ENCODE measurements at regions of chr1 and their contacts with region 1.

Region 1: GRCh38 chr1:201447911-201448871 is 20.8 kb downstream of the PHLDA3 start:
- DNase-seq: peak; percentile 65 to 67
- H3K4me3 ChIP-seq: no peak overlapping the region
- H3K4me3 Mint-ChIP-seq: no peak overlapping the region
- H3K27ac Mint-ChIP-seq: no peak overlapping the region
- H3K4me1 ChIP-seq: no peaks in the 10 kb centered on the region
- H3K4me1 Mint-ChIP-seq: no peaks in the 10 kb centered on the region
- H3K27me3 ChIP-seq: no peaks in the 10 kb centered on the region
- H3K27me3 Mint-ChIP-seq: peaks cover 2% of the 10 kb centered on the region
- CTCF ChIP-seq: peak; percentile 82 to 88

Region 2: DNA sequence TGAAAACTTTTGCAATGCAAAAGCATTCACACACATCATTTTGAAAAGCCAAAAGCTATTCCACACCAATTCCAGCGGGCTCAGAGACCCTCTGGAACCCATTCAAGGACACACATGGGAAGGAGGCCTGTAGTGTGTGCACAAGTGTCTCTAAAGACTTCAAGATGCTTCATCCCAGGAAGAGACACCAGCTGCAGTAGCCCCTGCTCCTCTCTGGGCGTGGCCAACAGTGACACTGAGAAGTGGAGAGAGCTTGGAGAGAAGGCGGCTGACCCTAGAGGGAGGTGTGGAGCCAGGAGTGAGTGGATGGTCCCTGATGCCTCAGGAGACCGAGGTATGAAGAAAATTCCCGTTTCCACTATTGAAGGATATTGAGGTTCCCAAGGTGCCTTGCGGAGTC is 11.8 kb before region 1 on chr1:
- CTCF ChIA-PET with region 1: interaction called, 25 read pairs
- POLR2A ChIA-PET with region 1: no interaction called
- intact Hi-C with region 1: no loop called
- DNase-seq: peak; percentile 66 to 72
- H3K4me3 ChIP-seq: no peak overlapping the region
- H3K4me3 Mint-ChIP-seq: no peak overlapping the region
- H3K27ac Mint-ChIP-seq: no peak overlapping the region
- H3K4me1 ChIP-seq: no peaks in the 10 kb centered on the region
- H3K4me1 Mint-ChIP-seq: peaks cover 6% of the 10 kb centered on the region
- H3K27me3 ChIP-seq: no peaks in the 10 kb centered on the region
- H3K27me3 Mint-ChIP-seq: peaks cover 3% of the 10 kb centered on the region
- CTCF ChIP-seq: peak in 1 of 2 experiments; percentile 44

Region 3: GRCh38 chr1:201460814-201461657 is 12.8 kb after region 1 on chr1:
- CTCF ChIA-PET with region 1: interaction called, 17 read pairs
- POLR2A ChIA-PET with region 1: no interaction called
- intact Hi-C with region 1: no loop called
- DNase-seq: peak; percentile 78 to 85
- H3K4me3 ChIP-seq: no peak overlapping the region
- H3K4me3 Mint-ChIP-seq: peak overlapping the region; percentile 46
- H3K27ac Mint-ChIP-seq: peak overlapping the region; percentile 88
- H3K4me1 ChIP-seq: peaks cover 26% of the 10 kb centered on the region
- H3K4me1 Mint-ChIP-seq: peaks cover 27% of the 10 kb centered on the region
- H3K27me3 ChIP-seq: no peaks in the 10 kb centered on the region
- H3K27me3 Mint-ChIP-seq: no peaks in the 10 kb centered on the region
- CTCF ChIP-seq: no peak

Region 4: DNA sequence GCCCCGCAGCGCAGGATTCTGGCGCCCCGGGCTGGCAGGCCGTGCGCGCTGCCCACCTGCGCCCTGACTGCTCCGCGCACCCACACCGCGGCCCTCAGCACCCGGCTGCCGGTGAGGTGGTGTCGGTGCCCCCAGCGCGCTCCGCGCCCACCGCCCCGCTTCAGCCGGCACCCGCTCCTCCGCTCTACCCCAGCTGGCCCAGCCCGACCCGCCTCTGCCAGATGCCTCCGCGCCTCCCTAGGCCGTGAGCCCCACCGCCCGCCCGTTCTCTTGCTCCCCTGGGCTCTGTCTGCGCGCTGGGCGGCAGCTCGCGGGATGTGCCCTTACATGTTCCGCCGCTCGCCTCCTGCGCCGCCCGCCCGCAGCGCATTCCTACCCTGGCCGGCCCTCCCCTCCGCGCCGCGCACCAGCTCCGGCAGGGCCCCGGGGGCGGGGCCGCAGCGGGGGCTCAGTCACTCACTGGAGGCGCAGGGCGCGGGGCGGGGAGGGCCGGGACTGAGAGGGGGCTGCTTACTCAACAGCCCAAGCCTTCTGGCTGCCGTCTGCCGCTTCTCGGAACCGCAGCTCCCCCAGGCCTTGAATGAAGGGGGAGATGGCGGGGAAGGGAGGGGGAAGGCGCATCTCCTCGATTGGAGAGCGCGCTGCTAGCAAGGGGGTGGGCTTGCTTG is 20.8 kb after region 1 on chr1 and contains the start of gene PHLDA3:
- CTCF ChIA-PET with region 1: interaction called, 26 read pairs
- POLR2A ChIA-PET with region 1: interaction called, 3 read pairs
- intact Hi-C with region 1: loop called (anchors 2 kb)
- DNase-seq: peak; percentile 83 to 87
- H3K4me3 ChIP-seq: peak within 1 kb of the TSS; percentile 65
- H3K4me3 Mint-ChIP-seq: peak within 1 kb of the TSS; percentile 84
- H3K27ac Mint-ChIP-seq: peak within 1 kb of the TSS; percentile 41
- H3K4me1 ChIP-seq: peaks cover 13% of the 10 kb centered on the region
- H3K4me1 Mint-ChIP-seq: no peaks in the 10 kb centered on the region
- H3K27me3 ChIP-seq: no peaks in the 10 kb centered on the region
- H3K27me3 Mint-ChIP-seq: no peaks in the 10 kb centered on the region
- CTCF ChIP-seq: no peak
- total RNA-seq, gene PHLDA3: 6.5 and 10.5 TPM in 2 replicates

Region 5: DNA sequence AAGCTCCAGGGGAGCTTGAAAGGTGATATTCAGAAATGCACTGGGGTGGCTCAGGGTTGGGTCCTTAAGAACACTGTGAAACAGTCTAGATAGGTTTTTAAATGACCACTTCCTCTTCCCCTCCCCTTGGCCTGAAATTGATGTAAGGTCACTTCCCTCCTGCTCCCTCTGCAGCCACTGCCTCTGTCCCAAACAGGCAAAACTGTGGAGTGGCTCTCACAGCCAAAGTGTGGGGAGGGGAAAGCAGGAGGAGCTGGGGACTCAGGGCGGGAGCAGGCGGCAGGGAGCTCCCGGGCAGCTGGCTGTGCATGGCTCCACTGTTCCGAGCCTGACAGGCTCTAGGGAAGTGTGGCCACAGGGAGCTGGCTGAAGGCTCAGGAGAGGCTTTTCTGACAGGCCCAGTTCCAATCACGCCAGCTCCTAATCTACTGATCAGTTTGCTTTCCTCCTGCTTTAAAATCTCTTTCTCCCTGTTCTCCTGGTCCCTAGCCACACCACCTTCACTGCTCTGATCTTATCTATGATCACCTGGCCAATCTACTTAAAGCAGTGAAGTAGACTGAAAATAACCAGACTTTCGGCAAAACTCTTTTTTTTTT is 63.8 kb after region 1 on chr1:
- CTCF ChIA-PET with region 1: interaction called, 29 read pairs
- POLR2A ChIA-PET with region 1: no interaction called
- intact Hi-C with region 1: loop called (anchors 1 kb)
- DNase-seq: no peak
- H3K4me3 ChIP-seq: no peak overlapping the region
- H3K4me3 Mint-ChIP-seq: no peak overlapping the region
- H3K27ac Mint-ChIP-seq: no peak overlapping the region
- H3K4me1 ChIP-seq: peaks cover 57% of the 10 kb centered on the region
- H3K4me1 Mint-ChIP-seq: peaks cover 43% of the 10 kb centered on the region
- H3K27me3 ChIP-seq: no peaks in the 10 kb centered on the region
- H3K27me3 Mint-ChIP-seq: no peaks in the 10 kb centered on the region
- CTCF ChIP-seq: no peak

Measured in Caco-2 (cell line).